ENCODE measurements at regions of chr12 and their contacts with region 1.

Region 1: GRCh38 chr12:56315622-56316473 is at the start of gene CNPY2:
- DNase-seq: peak; percentile 93 to 96
- ATAC-seq: peak; percentile 95 to 98
- H3K4me3 ChIP-seq: peak within 1 kb of the TSS; percentile 91 to 99 (median 98)
- H3K27ac ChIP-seq: peak within 1 kb of the TSS; percentile 96 to 99 (median 96)
- H3K4me1 ChIP-seq: peaks cover 19 to 20% of the 10 kb centered on the region in 2 donors
- H3K27me3 ChIP-seq: no peaks in the 10 kb centered on the region
- CTCF ChIP-seq: peak in 2 of 5 experiments; percentile 28 to 29
- POLR2A ChIP-seq: peak; percentile 84 to 88
- total RNA-seq, gene CNPY2: 21.7 to 59.1 (median 28.4) TPM

Region 2: DNA sequence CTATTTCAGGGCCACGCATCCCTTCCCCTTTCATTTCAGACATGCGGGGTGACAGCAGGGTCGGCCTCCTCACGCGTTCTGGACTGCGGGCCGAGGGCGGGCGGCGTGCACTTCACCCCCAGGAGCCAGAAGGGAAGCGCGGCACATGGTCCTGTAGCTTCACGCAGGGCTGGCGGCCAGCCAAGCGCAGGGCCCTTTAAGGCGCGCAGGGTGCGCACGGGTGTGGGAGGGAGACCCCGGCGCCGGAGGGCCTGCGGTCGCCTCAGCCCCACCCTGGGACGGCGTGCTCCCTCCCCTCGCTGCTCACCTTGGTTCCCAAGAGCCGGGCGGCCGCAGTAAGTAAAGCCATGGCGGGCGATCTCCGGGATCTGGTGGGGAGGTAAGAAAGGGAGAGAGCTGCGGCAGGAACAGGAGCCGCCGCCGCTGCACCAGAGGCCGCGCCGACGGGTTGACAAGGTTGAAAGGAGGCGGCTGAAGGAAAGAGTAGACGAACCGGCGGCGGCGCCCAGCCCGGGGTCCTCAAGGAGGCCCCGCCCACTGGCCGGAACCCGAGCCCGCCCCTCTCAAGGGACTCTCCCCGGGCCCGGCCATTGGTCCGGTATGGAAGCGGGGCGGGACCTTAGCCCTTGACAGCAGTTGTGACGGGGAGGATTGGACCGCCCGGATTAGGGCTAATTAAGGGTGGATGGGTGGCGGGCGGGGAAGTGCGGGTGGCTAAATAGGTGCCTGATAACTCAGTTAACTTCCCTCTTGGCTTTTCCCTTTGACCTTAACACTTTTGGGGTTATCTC is 15.8 kb before region 1 on chr12 and contains the start of gene CS:
- in situ Hi-C with region 1: no loop called
- intact Hi-C with region 1: loop called (anchors 1 kb)
- DNase-seq: peak; percentile 99
- ATAC-seq: peak; percentile 82 to 94
- H3K4me3 ChIP-seq: peak within 1 kb of the TSS; percentile 74 to 95 (median 86)
- H3K27ac ChIP-seq: peak within 1 kb of the TSS; percentile 91 to 97 (median 94)
- H3K4me1 ChIP-seq: peaks cover 66 to 71% of the 10 kb centered on the region in 2 donors
- H3K27me3 ChIP-seq: no peaks in the 10 kb centered on the region
- CTCF ChIP-seq: peak in 1 of 5 experiments; percentile 29
- POLR2A ChIP-seq: peak; percentile 86 to 92
- total RNA-seq, gene CS: 211 to 359 (median 271) TPM

Region 3: GRCh38 chr12:56333679-56334489 is 18.0 kb after region 1 on chr12 and contains the start of gene PAN2:
- in situ Hi-C with region 1: no loop called
- intact Hi-C with region 1: loop called (anchors 1 kb)
- DNase-seq: peak; percentile 95 to 97
- ATAC-seq: peak; percentile 98 to 99
- H3K4me3 ChIP-seq: peak within 1 kb of the TSS; percentile 53 to 81 (median 78)
- H3K27ac ChIP-seq: peak within 1 kb of the TSS; percentile 76 to 95 (median 92)
- H3K4me1 ChIP-seq: peaks cover 9 to 14% of the 10 kb centered on the region in 2 donors
- H3K27me3 ChIP-seq: no peaks in the 10 kb centered on the region
- CTCF ChIP-seq: peak; percentile 30 to 46 (median 43)
- POLR2A ChIP-seq: peak; percentile 88 to 89
- total RNA-seq, gene PAN2: 7.8 to 33.0 (median 11.6) TPM

Region 4: GRCh38 chr12:56391721-56392120 is 75.9 kb after region 1 on chr12:
- in situ Hi-C with region 1: no loop called
- intact Hi-C with region 1: no loop called
- DNase-seq: no peak
- ATAC-seq: no peak
- H3K4me3 ChIP-seq: no peak overlapping the region
- H3K27ac ChIP-seq: no peak overlapping the region
- H3K4me1 ChIP-seq: no peaks in the 10 kb centered on the region
- H3K27me3 ChIP-seq: no peaks in the 10 kb centered on the region
- CTCF ChIP-seq: no peak
- POLR2A ChIP-seq: no peak

Measured in gastrocnemius medialis (tissue), 4 donors.